WTC11 (cell line): ENCODE measurements at regions of chr17 and their contacts with region 1.

Region 1: DNA sequence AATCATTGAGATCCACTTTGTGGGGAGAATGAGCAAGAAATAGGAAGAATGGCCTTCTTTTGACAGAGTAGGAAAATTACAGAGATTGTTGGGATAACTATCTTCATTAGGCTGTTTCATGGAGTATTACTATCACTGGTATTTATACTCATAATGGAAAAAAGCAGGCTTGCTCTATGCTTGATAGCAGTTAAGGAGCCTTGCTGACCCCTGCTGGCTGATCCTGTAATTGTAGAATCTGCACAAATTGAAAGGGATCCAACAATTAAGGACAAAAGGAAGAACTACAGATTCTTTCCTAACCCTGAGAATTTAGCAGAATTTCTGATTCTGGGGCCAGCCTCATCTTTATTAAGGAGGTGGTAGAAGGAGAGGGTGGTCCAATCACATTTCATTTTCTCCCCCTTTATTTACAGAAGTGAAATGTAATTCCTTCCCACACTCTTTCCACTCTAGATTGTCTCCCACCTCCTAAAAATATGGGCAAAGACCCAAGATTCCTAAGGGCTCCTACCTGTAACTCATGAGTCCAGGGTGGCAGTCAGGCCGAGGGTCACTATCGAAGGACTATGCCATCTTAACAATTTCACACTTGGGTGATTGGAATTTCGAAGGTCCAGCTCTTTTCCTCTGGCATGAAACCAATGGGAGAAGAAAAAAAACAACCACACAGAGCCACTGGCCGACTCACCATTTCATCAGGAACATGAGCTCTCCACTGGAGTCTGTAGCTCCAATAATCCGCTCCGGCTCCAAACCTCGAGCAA is 26.3 kb downstream of the NFE2L1 start:
- DNase-seq: peak; percentile 80
- ATAC-seq: peak; percentile 67
- H3K4me3 Mint-ChIP-seq: no peak overlapping the region
- H3K27ac Mint-ChIP-seq: peak overlapping the region; percentile 55
- H3K4me1 Mint-ChIP-seq: no peaks in the 10 kb centered on the region
- H3K27me3 Mint-ChIP-seq: no peaks in the 10 kb centered on the region
- CTCF ChIP-seq: peak; percentile 35; the same call in 1 of the 2 replicates

Region 2: DNA sequence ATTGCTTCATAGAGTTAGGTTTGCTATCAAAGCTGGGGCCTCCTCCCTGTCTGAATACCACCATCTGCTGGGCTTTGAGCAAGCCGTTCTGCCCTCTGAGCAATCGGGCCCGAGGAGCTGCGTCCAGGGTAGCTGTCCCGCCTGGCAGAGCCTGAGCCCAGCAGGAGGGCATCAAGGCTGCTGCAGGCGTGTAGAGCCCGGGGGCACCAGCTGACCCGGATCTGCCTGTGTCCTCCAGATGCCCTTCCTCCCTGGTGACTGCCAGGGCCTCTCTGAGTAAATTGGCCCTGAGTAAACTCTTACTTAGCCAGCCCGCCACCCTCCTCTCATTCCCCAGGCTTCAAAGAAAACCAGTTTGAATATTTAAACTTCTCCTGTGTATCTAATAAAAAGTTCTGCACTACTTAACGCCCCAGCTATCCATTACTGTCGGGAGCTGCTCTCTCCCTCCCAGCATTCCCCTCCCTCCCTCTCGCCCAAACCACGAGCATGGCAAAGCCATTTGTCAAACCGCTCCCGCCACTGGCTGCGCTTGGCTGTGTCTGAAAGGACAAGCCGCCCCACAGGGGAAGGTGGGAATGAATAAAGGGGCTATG is 87.2 kb before region 1 on chr17:
- CTCF ChIA-PET with region 1: no interaction called
- POLR2A ChIA-PET with region 1: no interaction called
- DNase-seq: peak; percentile 40
- ATAC-seq: peak; percentile 38
- H3K4me3 Mint-ChIP-seq: no peak overlapping the region
- H3K27ac Mint-ChIP-seq: no peak overlapping the region
- H3K4me1 Mint-ChIP-seq: peaks cover 42% of the 10 kb centered on the region
- H3K27me3 Mint-ChIP-seq: no peaks in the 10 kb centered on the region
- CTCF ChIP-seq: no peak

Region 3: DNA sequence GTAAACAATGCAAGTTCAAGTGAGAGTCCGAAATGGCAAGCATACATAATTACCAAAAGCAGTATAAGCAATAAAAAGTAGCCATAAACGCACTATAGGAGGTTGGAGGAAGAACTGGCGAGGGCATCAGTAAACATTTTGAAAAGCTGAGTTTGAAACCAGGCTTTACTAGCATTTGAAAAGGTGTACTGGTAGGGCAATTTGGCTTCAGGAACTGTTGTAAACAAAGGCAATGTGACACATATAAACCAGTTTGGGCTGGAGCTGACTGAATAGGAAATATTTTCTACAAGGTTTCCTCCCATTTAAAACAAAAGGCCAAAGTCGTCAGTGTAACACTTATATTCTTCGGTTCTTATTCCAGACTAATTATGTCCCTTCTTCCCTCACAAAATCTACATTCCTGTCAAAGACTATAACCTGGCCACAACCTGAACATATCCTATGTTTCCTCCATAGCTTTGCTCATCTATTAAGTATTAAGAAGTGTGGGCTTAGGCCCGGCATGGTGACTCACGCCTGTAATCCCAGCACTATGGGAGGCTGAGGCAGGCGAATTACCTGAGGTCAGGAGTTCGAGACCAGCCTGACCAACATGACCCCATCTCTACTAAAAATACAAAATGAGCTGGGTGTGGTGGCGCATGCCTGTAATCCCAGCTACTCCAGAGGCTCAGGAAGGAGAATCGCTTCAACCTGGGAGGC is 19.0 kb after region 1 on chr17:
- CTCF ChIA-PET with region 1: interaction called, 22 read pairs
- POLR2A ChIA-PET with region 1: interaction called, 6 read pairs
- DNase-seq: no peak
- ATAC-seq: no peak
- H3K4me3 Mint-ChIP-seq: no peak overlapping the region
- H3K27ac Mint-ChIP-seq: peak overlapping the region; percentile 36
- H3K4me1 Mint-ChIP-seq: peaks cover 10% of the 10 kb centered on the region; the same call in 1 of the 2 replicates
- H3K27me3 Mint-ChIP-seq: no peaks in the 10 kb centered on the region
- CTCF ChIP-seq: no peak